A549 (cell line): ENCODE measurements at regions of chr1 and their contacts with region 1.

Region 1: GRCh38 chr1:204941421-204942338 is 71.0 kb downstream of the NFASC start:
- DNase-seq: peak; percentile 52 to 57
- ATAC-seq: peak in 1 of 2 experiments; percentile 86; a peak in 3 of 6 replicates
- H3K4me3 ChIP-seq: no peak overlapping the region
- H3K27ac ChIP-seq: no peak overlapping the region
- H3K4me1 ChIP-seq: no peaks in the 10 kb centered on the region
- CTCF ChIP-seq: peak; percentile 73
- EP300 ChIP-seq: no peak
- POLR2A ChIP-seq: no peak
- RAD21 ChIP-seq: peak; percentile 34 to 69; a peak in 2 of 5 replicates

Region 2: DNA sequence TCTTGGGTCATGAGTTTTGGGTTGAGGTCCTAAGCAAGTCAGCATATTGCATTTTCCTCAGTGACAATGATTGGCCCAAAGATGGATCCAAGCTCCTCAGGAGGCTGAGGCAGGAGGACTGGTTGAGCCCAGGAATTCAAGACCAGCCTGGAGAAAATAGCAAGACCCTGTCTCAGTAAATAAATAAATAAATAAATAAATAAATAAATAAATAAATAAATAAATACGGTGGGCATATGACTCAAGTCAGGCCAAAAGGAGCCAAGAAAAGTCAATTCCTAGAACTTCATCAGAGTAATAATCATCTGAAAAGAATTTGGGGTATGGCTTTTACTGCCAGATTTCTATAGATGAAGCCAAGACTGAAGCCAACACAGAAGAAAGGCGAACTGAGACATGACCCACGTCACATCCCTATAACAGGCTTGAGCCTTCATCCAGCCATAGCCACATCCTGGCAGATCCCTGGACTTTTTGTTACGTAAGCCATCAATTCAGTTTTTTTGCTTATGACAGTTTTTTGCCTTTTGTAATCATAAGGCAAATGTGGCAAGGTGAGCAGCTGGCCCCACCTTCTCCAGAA is 159.5 kb before region 1 on chr1:
- CTCF ChIA-PET with region 1: no interaction called
- POLR2A ChIA-PET with region 1: no interaction called
- DNase-seq: no peak
- ATAC-seq: no peak
- H3K4me3 ChIP-seq: no peak overlapping the region
- H3K27ac ChIP-seq: no peak overlapping the region
- H3K4me1 ChIP-seq: no peaks in the 10 kb centered on the region
- CTCF ChIP-seq: no peak
- EP300 ChIP-seq: no peak
- POLR2A ChIP-seq: no peak
- RAD21 ChIP-seq: no peak

Region 3: DNA sequence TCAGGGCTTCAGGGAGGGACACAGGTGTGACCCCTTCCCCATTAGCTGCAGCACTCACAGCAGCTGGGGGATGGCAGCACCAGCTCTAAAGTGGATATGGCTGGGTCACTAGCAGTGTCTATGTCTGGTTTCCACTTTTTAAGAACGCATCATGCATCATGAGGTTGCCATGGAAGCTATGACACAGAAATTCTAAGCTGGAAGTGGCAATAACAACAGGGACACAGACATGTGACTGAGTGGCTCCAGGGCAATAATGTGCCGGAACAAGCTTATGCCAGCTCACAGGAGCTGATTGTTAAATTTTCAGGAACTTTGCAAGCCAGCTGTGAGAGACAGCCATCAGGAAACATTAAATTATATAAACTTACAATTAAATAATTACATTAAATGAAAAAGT is 122.2 kb before region 1 on chr1:
- CTCF ChIA-PET with region 1: interaction called, 17 read pairs
- POLR2A ChIA-PET with region 1: no interaction called
- DNase-seq: no peak
- ATAC-seq: no peak
- H3K4me3 ChIP-seq: no peak overlapping the region
- H3K27ac ChIP-seq: no peak overlapping the region
- H3K4me1 ChIP-seq: no peaks in the 10 kb centered on the region
- CTCF ChIP-seq: no peak
- EP300 ChIP-seq: no peak
- POLR2A ChIP-seq: no peak
- RAD21 ChIP-seq: no peak

Region 4: DNA sequence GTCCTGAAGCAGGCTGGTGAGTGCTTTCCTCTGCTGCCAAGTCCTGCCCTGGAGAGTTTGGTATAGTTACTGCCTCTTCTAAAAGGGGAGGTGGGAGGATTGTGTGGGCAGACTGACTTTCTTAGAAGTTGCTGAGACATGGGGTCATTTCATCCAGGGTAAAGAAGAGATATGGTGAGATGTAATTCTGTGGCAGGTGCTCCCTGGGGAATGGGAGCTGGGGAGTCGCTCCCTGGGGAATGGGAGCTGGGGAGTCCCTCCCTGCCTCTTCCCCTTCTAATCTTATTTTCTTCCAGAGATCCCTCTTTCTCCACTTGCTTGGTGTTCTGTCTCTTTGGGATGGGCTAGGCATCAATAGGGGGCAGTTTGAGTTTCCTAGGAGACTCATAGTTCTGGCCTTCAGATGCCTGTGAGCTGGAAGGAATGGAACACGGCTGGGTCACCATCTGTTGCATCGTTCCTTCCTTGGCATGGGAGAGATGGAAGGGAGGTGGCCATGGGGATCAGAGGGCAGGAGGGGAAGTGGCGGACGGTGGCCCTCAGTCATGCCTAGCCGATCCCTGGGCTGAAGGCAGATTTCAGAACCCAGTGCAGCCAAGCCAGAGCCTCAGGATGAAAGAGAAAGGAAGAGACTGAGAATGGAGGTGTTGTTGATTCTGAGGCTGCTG is 12.1 kb before region 1 on chr1:
- CTCF ChIA-PET with region 1: interaction called, 18 read pairs
- POLR2A ChIA-PET with region 1: no interaction called
- DNase-seq: no peak
- ATAC-seq: no peak
- H3K4me3 ChIP-seq: no peak overlapping the region
- H3K27ac ChIP-seq: no peak overlapping the region
- H3K4me1 ChIP-seq: peaks cover 3% of the 10 kb centered on the region; the same call in 2 of the 3 replicates
- CTCF ChIP-seq: no peak
- EP300 ChIP-seq: no peak
- POLR2A ChIP-seq: no peak
- RAD21 ChIP-seq: no peak

Region 5: DNA sequence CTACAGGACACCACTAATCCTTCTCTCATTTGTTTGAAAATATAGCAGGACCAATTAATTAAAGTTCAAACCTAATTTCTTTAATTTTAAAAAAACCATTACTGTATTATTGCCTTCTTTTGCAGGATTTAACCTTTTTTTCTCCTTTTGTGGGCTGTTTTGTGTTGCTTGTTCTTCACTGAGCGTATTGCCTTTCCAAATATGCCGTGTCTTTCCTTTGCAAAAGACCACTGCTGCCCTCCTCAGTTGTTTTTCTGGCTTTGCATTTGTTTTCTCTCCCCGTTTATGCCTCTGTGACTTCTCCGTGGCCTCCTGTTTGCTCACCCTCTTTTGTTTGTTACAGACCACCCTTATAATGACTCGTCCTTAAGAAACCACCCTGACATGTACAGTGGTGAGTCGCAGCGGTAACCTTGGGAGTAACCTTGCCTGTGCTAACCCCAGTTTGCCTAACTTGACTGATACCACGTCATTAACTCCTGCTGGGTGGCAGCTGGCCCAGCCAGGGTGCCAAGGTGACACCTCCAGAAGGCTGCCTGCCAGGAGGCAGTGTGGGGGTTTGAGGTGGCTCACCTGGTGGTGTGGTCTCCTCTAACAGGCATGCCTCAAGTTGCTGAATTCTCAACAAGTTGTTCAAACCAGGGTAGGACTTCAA is 20.2 kb after region 1 on chr1:
- CTCF ChIA-PET with region 1: interaction called, 12 read pairs
- POLR2A ChIA-PET with region 1: no interaction called
- DNase-seq: no peak
- ATAC-seq: no peak
- H3K4me3 ChIP-seq: no peak overlapping the region
- H3K27ac ChIP-seq: no peak overlapping the region
- H3K4me1 ChIP-seq: no peaks in the 10 kb centered on the region
- CTCF ChIP-seq: no peak
- EP300 ChIP-seq: no peak
- POLR2A ChIP-seq: no peak
- RAD21 ChIP-seq: peak in 1 of 2 experiments; percentile 17; a peak in 1 of 5 replicates